ENCODE measurements at regions of chr3 and their contacts with region 1.

Region 1: GRCh38 chr3:150348500-150348899 is 59.6 kb upstream of the TSC22D2 start:
- DNase-seq: peak; percentile 88
- ATAC-seq: peak; percentile 80
- H3K4me3 ChIP-seq: no peak overlapping the region; a peak in 1 of 4 replicates
- H3K27ac ChIP-seq: peak overlapping the region; percentile 100
- H3K4me1 ChIP-seq: peaks cover 92% of the 10 kb centered on the region
- H3K27me3 ChIP-seq: no peaks in the 10 kb centered on the region
- CTCF ChIP-seq: no peak

Region 2: GRCh38 chr3:150238998-150239619 is 109.4 kb before region 1 on chr3:
- CTCF ChIA-PET with region 1: interaction called, 5 read pairs
- POLR2A ChIA-PET with region 1: interaction called, 5 read pairs
- in situ Hi-C with region 1: no loop called
- intact Hi-C with region 1: loop called (anchors 10 kb)
- DNase-seq: no peak
- ATAC-seq: peak; percentile 77
- H3K4me3 ChIP-seq: no peak overlapping the region
- H3K27ac ChIP-seq: peak overlapping the region; percentile 10; the same call in 1 of the 2 replicates
- H3K4me1 ChIP-seq: peaks cover 10% of the 10 kb centered on the region; the same call in 1 of the 2 replicates
- H3K27me3 ChIP-seq: no peaks in the 10 kb centered on the region
- CTCF ChIP-seq: peak; percentile 89

Region 3: GRCh38 chr3:150371741-150372254 is 23.3 kb after region 1 on chr3:
- CTCF ChIA-PET with region 1: interaction called, 3 read pairs
- POLR2A ChIA-PET with region 1: interaction called, 14 read pairs
- in situ Hi-C with region 1: no loop called
- intact Hi-C with region 1: no loop called
- DNase-seq: peak; percentile 100
- ATAC-seq: peak; percentile 81
- H3K4me3 ChIP-seq: peak overlapping the region; percentile 39 to 62
- H3K27ac ChIP-seq: peak overlapping the region; percentile 100
- H3K4me1 ChIP-seq: peaks cover 66% of the 10 kb centered on the region
- H3K27me3 ChIP-seq: no peaks in the 10 kb centered on the region
- CTCF ChIP-seq: no peak

Region 4: DNA sequence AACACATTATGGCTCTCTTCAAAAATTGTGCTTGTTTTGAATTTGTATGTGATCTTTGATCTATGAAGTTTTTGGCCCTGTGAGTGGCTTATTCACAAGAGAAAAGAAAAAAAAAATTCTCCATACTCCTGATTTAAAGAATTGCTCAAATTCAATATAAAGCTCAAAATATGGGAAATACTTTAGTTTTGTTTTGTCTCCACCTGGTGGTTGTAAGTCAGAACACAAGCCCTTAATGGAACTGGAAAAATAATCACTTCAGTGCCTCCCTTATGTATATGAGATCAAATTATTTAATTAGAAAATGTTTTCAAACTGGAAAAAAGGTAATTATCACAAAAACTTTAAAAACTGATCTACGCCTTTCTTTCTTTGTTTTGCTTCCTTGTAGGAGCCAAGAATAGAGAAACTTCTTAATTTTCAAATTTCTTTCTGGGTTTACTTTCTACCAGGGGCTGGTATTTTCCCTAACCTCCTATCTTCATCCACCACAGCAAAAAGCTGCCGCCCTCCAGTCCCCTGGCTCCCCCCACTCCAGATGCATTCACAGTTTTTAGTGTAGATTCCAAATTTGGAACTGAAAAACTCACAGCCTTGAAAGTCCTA is 147.2 kb after region 1 on chr3:
- CTCF ChIA-PET with region 1: no interaction called
- POLR2A ChIA-PET with region 1: interaction called, 14 read pairs
- in situ Hi-C with region 1: no loop called
- intact Hi-C with region 1: no loop called
- DNase-seq: peak; percentile 61
- ATAC-seq: peak; percentile 39; the same call in 1 of the 2 replicates
- H3K4me3 ChIP-seq: no peak overlapping the region
- H3K27ac ChIP-seq: peak overlapping the region; percentile 71; the same call in 1 of the 2 replicates
- H3K4me1 ChIP-seq: peaks cover 18% of the 10 kb centered on the region
- H3K27me3 ChIP-seq: no peaks in the 10 kb centered on the region
- CTCF ChIP-seq: peak; percentile 76

Region 5: DNA sequence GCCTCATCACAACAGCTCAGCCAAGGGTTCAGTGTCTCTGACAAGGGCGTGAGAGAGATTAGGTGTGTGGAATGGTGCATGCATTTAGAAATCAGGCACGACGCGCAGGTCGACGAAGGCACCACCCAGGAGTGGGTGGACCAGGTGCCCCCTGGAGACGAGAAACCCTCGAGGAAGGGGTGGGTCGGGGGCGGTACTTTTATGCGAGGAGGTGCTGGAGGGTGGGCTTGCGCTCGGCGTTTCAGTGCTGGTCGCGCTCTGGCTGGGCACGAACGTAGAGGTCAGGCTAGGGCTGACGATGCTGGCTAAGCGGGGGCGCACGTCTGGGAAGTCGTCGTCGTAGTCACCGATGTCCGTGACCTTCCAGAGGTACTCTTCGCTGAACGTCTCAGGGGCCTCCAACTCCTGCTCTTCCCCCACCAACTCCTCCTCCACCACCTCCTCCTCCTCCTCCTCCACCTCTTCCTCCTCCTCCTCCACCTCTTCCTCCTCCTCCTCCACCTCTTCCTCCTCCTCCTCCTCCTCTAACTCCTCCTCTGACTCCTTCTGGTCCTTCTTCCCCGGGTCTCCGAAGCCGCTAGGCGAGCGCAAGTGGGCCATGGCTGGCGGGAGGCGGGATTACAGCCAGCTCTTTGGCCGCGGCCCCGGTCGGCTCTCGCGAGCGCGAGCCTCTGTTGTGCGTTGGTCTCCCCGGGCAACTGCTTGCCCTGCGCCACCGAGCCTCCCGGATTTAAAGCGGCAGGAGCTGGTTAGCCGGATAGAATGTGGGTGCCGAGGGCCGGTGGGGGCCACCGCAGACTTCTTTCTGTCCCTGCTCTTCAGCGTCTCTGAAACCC is 355.0 kb after region 1 on chr3 and contains the start of gene ERICH6:
- CTCF ChIA-PET with region 1: no interaction called
- POLR2A ChIA-PET with region 1: interaction called, 24 read pairs
- in situ Hi-C with region 1: no loop called
- intact Hi-C with region 1: no loop called
- DNase-seq: peak; percentile 61
- ATAC-seq: peak; percentile 98
- H3K4me3 ChIP-seq: peak within 1 kb of the TSS; percentile 70 to 82
- H3K27ac ChIP-seq: peak within 1 kb of the TSS; percentile 92
- H3K4me1 ChIP-seq: 0 out of 2 replicates have a peak, but pooled peaks cover 6% of the 10 kb centered on the region
- H3K27me3 ChIP-seq: no peaks in the 10 kb centered on the region
- CTCF ChIP-seq: no peak
- total RNA-seq, gene ERICH6: 0.28 TPM

Measured in Panc1 (cell line).